Esophagus muscularis mucosa (tissue), 4 donors: ENCODE measurements at regions of chr10 and their contacts with region 1.

Region 1: DNA sequence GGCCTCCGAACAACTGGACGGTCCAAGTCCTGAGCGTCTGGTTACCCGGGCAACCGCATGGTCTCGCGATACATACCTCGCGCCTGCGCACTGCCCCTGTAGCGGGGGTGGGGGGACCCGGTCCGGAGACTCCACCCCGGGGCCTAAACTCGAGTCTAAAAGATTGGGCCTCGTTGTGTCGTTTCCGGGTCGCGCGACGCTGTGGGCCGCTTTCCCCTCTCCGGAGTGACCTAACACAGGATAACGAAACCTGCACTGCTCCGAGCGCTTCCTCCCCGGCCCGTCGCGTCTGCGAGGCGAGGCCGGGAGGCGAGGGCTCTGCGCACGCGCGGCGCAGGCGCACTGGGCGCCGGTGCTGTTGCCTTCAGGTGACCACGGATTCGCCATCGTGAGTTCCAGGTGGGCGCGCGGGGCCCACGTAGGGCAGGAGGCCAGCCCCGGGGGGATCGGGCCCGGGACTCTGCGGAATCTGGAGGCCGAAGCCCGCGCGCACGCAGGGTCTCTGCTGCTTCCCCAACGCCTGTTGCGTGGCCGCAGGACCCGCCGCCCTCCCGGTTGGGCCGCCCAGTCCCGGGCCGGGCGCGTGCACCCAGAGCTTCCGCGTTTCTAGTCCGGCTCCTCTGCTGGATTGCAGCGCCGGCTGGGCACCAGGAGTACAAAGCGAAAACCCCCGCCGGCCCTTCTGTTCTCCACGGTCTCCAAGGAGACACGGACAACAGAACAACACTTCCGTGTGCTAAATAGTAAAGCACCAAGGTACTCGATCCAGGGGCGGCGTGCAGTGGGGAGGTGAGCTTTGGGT is at the start of gene RPP38:
- DNase-seq: peak; percentile 99
- H3K4me3 ChIP-seq: peak within 1 kb of the TSS; percentile 75 to 93 (median 84)
- H3K27ac ChIP-seq: peak within 1 kb of the TSS; percentile 89 to 98 (median 94)
- H3K4me1 ChIP-seq: peaks cover 19 to 39% (median 31%) of the 10 kb centered on the region in 4 donors
- H3K27me3 ChIP-seq: peaks cover 0 to under 1% (median 0%) of the 10 kb centered on the region in 4 donors
- CTCF ChIP-seq: peak in 1 of 3 experiments; percentile 4
- EP300 ChIP-seq: no peak
- POLR2A ChIP-seq: no peak
- total RNA-seq, gene RPP38: 9.1 to 16.2 (median 10.9) TPM

Region 2: GRCh38 chr10:14954001-14954770 is 143.0 kb before region 1 on chr10 and contains the start of gene DCLRE1C:
- intact Hi-C with region 1: loop called (anchors 5 kb)
- DNase-seq: peak; percentile 97
- H3K4me3 ChIP-seq: peak within 1 kb of the TSS; percentile 72 to 90 (median 75)
- H3K27ac ChIP-seq: peak within 1 kb of the TSS; percentile 86 to 94 (median 90)
- H3K4me1 ChIP-seq: peaks cover 15 to 43% (median 32%) of the 10 kb centered on the region in 4 donors
- H3K27me3 ChIP-seq: no peaks in the 10 kb centered on the region
- CTCF ChIP-seq: no peak
- EP300 ChIP-seq: no peak
- POLR2A ChIP-seq: no peak
- total RNA-seq, gene DCLRE1C: 6.6 to 12.8 (median 10.6) TPM

Region 3: GRCh38 chr10:15395935-15396334 is 298.7 kb after region 1 on chr10:
- intact Hi-C with region 1: no loop called
- DNase-seq: no peak
- H3K4me3 ChIP-seq: no peak overlapping the region
- H3K27ac ChIP-seq: no peak overlapping the region
- H3K4me1 ChIP-seq: no peaks in the 10 kb centered on the region
- H3K27me3 ChIP-seq: no peaks in the 10 kb centered on the region
- CTCF ChIP-seq: no peak
- EP300 ChIP-seq: no peak
- POLR2A ChIP-seq: no peak